ENCODE measurements at regions of chr9 and their contacts with region 1.

Region 1: DNA sequence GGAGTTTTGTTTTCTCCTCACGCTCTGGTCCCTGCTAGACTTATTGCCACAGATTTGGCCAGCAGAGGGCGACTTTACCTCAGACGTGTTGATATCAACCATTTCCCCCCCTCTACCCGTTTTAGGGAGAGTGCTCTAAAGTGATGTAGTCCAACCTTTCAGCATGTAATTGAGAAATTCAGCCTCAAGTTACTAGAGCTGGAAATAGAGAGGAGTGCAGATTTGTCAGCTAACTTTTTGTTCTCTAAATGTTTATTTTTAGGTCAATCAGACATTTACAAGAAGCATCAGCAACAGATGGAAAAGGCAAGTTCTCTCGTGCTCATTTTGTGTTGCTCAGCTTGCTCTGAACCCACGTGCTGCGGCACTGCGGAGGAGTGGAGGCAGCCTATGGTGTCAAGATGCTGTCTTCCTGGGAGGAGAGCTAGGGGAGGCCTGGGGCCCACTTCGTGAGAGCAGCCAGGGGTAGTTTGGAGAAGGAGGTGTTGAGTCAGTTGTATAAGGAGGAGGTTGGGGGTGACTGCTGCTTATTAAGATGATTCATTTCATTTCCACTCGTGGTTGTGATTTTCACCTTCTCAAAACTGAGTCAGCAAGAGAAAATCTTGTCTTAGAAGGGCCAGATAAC is 53.6 kb downstream of the GPR107 start:
- DNase-seq: peak in 2 of 3 donors; percentile 76 to 97
- ATAC-seq: peak; percentile 86
- H3K4me3 ChIP-seq: no peak overlapping the region
- H3K4me1 ChIP-seq: no peaks in the 10 kb centered on the region
- CTCF ChIP-seq: peak; percentile 49

Region 2: DNA sequence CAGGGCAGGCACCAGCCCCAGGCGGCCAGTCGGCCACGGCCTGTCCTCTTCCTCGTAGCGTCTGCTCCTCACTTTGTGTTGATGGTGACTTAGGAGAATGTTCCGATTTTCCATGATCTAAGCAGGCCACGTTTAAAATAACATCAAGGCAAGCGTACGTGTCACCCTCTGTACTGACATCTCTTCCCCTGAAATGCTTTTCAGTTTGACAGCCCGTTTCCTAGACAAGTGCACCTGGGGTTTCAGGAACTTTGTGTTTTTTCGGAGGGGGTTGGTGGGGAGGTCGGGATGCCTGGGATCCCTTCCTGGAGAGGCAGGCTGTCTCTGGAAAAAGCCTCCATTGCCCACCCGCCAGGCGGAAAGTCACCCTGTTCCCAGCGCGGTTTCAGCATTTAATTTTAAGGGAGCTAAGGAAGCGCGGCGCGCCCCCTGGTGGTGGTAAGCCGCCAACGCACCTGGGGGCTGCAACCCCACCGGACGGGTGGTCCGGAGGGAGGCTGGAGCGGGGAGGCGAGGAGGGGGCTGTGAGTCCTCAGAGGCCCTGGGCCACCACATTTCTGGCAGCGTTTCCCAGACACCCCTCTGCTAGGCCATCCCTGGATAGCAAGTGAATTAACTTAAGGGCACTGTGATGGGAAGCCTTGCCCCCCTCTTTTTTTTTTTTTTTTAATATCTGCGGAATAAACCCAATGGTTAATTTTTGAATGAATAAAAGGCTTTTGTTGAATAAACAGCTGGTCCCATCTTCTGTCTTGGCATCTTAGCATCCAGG is 128.7 kb after region 1 on chr9:
- intact Hi-C with region 1: loop called (anchors 5 kb)
- DNase-seq: peak; percentile 42 to 75 (median 71)
- ATAC-seq: peak; percentile 65
- H3K4me3 ChIP-seq: no peak overlapping the region
- H3K4me1 ChIP-seq: no peaks in the 10 kb centered on the region
- CTCF ChIP-seq: peak; percentile 97

Region 3: GRCh38 chr9:130343445-130343918 is 236.1 kb after region 1 on chr9:
- intact Hi-C with region 1: loop called in 1 of 2 experiments (anchors 10 kb)
- DNase-seq: peak; percentile 42 to 52 (median 46)
- ATAC-seq: peak; percentile 27
- H3K4me3 ChIP-seq: no peak overlapping the region
- H3K4me1 ChIP-seq: no peaks in the 10 kb centered on the region
- CTCF ChIP-seq: peak; percentile 47

Measured in mucosa of descending colon (tissue), 3 donors.